ENCODE measurements at regions of chr1 and their contacts with region 1.

Region 1: GRCh38 chr1:89085781-89086180 is 20.8 kb upstream of the GBP1 start:
- DNase-seq: peak in 17 of 35 experiments; percentile 4 to 74 (median 32)
- ATAC-seq: peak in 1 of 4 experiments; percentile 55
- H3K4me3 ChIP-seq: no peak overlapping the region
- H3K4me3 Mint-ChIP-seq: no peak overlapping the region
- H3K27ac ChIP-seq: no peak overlapping the region
- H3K27ac Mint-ChIP-seq: no peak overlapping the region
- H3K4me1 ChIP-seq: peaks cover 0 to 2% of the 10 kb centered on the region in 2 experiments
- H3K4me1 Mint-ChIP-seq: peaks cover 0 to 6% (median 0%) of the 10 kb centered on the region in 3 donors
- H3K27me3 ChIP-seq: no peaks in the 10 kb centered on the region
- H3K27me3 Mint-ChIP-seq: no peaks in the 10 kb centered on the region

Region 2: DNA sequence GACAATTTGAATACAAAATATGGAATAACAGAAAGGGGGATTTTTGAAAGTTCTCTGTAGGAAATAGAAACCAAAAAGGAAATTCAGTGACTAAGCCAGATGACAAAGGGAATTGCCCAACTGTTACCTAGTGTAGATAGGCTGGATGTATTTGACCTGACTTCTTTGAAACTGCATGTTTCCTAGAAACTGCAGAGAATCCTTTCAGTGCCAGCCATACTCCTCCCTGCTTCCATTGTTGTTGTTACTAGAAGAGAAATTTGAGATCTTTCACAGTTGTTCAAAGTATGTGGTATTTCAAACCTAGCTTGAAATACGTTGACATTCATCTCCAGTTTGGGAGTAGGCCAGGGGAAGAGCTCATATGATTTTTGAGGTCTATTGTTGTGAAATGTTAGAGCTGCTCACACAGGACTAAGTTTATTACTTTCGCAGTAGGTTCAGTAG is 188.7 kb after region 1 on chr1:
- CTCF ChIA-PET with region 1: interaction called in 1 of 2 experiments, 11 read pairs
- POLR2A ChIA-PET with region 1: no interaction called
- DNase-seq: peak in 3 of 35 experiments; percentile 9 to 74 (median 30)
- ATAC-seq: peak in 3 of 4 experiments; percentile 23 to 56 (median 24)
- H3K4me3 ChIP-seq: peak overlapping the region in 1 of 2 donors; percentile 28
- H3K4me3 Mint-ChIP-seq: peak overlapping the region; percentile 71 to 82 (median 76)
- H3K27ac ChIP-seq: peak overlapping the region; percentile 87
- H3K27ac Mint-ChIP-seq: peak overlapping the region; percentile 92 to 99
- H3K4me1 ChIP-seq: peaks cover 37 to 51% of the 10 kb centered on the region in 2 experiments
- H3K4me1 Mint-ChIP-seq: peaks cover 62 to 90% (median 79%) of the 10 kb centered on the region in 3 donors
- H3K27me3 ChIP-seq: no peaks in the 10 kb centered on the region
- H3K27me3 Mint-ChIP-seq: no peaks in the 10 kb centered on the region

Region 3: DNA sequence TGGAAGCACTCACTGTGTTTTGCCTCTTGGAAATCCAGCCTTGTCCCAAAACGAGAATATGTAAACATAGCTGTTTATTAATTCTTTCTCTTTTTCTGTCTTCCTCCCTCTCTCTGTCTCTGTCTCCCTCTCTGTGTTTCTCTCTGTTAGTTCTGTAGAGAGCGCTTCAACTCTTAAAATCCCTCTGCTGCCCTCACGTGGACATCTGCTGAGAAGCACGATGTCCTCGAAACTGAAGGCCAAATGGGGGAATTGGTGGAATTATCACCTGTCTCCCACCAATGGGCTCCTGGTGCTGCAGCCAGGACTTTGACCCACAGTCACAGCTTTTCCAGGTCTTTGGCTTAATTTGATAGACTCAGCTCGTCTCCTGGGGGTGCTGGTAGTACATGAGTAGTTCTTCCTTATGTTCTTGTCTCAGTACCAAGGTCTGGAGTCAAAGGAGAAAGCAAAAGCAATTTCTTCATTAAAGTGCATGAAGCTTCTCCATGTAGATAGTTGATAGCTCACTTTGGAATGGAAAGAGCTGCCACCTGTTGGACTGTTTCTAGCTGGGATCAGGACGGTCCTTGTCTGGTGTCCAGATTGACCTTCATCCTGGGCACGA is 272.6 kb after region 1 on chr1:
- CTCF ChIA-PET with region 1: interaction called, 4 to 24 read pairs
- POLR2A ChIA-PET with region 1: no interaction called
- DNase-seq: peak; percentile 58 to 88 (median 79)
- ATAC-seq: peak; percentile 91 to 97 (median 95)
- H3K4me3 ChIP-seq: no peak overlapping the region
- H3K4me3 Mint-ChIP-seq: peak overlapping the region in 2 of 3 donors; percentile 0 to 60
- H3K27ac ChIP-seq: no peak overlapping the region
- H3K27ac Mint-ChIP-seq: peak overlapping the region; percentile 65 to 84
- H3K4me1 ChIP-seq: peaks cover 0 to 5% of the 10 kb centered on the region in 2 experiments
- H3K4me1 Mint-ChIP-seq: peaks cover 36 to 47% (median 37%) of the 10 kb centered on the region in 3 donors
- H3K27me3 ChIP-seq: no peaks in the 10 kb centered on the region
- H3K27me3 Mint-ChIP-seq: no peaks in the 10 kb centered on the region

Region 4: DNA sequence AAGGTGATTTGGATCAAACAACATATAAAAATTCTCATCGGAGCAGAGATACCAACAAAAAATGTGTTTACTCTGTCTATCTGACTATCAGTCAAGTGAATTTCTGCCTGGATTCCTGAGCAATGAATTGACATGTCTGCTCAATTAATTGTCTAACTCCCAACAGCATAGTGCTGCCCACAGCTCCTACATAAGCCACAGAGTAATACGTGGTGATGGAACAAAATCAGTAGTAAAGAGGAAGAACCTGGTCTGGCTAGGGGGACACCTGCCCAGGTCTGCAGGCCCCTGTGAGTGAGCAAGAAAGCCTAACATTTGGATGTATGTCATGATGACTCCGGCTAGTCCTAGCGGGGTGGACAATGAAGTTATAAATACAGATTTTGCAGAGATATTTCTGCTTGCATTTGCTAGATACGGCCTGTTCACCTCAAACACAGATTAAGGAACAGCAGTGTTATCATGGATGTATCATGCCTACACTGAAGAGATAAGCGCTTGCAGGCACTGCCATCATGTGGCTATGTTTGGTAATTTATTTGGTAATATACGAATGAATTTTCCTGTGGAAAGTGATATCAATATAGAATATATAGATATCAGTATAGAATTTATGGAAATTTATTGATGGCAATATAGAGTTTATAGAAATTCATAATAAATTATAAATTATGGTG is 369.2 kb after region 1 on chr1:
- CTCF ChIA-PET with region 1: interaction called, 4 to 13 read pairs
- POLR2A ChIA-PET with region 1: no interaction called
- DNase-seq: peak; percentile 8 to 79 (median 49)
- ATAC-seq: peak; percentile 75 to 91 (median 79)
- H3K4me3 ChIP-seq: no peak overlapping the region
- H3K4me3 Mint-ChIP-seq: no peak overlapping the region
- H3K27ac ChIP-seq: no peak overlapping the region
- H3K27ac Mint-ChIP-seq: no peak overlapping the region
- H3K4me1 ChIP-seq: peaks cover 0 to 2% of the 10 kb centered on the region in 2 experiments
- H3K4me1 Mint-ChIP-seq: peaks cover 9 to 12% (median 11%) of the 10 kb centered on the region in 3 donors
- H3K27me3 ChIP-seq: no peaks in the 10 kb centered on the region
- H3K27me3 Mint-ChIP-seq: peaks cover 7 to 21% of the 10 kb centered on the region in 2 donors

Region 5: GRCh38 chr1:89538361-89538760 is 452.6 kb after region 1 on chr1:
- CTCF ChIA-PET with region 1: no interaction called
- POLR2A ChIA-PET with region 1: no interaction called
- DNase-seq: no peak
- ATAC-seq: no peak
- H3K4me3 ChIP-seq: no peak overlapping the region
- H3K4me3 Mint-ChIP-seq: no peak overlapping the region
- H3K27ac ChIP-seq: no peak overlapping the region
- H3K27ac Mint-ChIP-seq: no peak overlapping the region
- H3K4me1 ChIP-seq: no peaks in the 10 kb centered on the region
- H3K4me1 Mint-ChIP-seq: peaks cover 54 to 72% (median 66%) of the 10 kb centered on the region in 3 donors
- H3K27me3 ChIP-seq: no peaks in the 10 kb centered on the region
- H3K27me3 Mint-ChIP-seq: no peaks in the 10 kb centered on the region

Measured in T-cell (primary cell).